Activated CD4-positive, alpha-beta T cell treated with anti-CD3 and anti-CD28 coated beads for 36 hours (primary cell): ENCODE measurements at regions of chr2 and their contacts with region 1.

Region 1: DNA sequence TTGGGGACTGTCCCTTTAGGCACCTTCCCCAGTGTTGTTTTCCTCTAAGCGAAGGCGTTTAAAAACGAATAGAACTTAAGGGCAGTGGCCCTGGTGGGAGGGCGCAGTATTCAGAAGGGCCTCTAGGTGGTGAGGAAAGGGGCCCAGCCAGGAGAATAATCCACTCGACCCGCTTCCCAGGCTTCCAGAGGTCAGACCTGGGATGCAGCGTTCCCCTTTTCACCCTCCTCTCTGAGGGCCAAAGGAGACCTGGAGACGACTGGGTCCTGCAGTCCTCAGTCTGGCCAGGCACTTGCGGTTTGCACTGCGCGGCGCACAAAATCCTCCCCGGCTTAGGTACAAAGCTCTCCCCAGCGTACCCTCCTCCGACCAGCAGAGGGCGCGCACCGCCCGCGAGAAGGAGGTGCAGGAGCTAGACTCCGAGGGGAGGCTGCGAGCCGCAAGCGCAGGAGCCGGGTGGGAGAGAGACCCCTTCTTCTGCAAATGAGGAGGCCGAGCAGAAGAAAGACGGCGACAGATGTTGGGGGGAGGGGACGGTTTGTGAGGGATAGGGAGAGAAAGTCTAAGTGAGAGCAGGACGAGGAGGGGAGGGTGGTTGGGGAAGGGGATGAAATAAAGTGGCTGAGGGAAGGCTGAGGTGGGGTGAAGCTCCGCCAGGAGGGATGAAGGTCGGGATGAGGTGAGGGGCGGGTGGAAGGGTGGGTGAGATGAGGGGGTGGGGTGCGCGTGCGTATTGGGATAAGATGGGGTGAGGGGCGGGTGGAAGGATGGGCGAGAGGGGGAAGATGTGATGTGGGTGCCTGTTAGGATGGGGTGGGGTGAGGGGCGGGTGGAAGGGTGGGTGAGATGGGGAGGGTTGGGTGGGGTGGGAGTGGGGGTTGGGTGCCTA is 4.9 kb downstream of the FEV start:
- DNase-seq: peak; percentile 93
- ATAC-seq: peak; percentile 90
- H3K4me3 Mint-ChIP-seq: peak overlapping the region; percentile 43
- H3K27ac Mint-ChIP-seq: no peak overlapping the region
- H3K4me1 Mint-ChIP-seq: peaks cover 28% of the 10 kb centered on the region
- H3K27me3 Mint-ChIP-seq: peaks cover 56% of the 10 kb centered on the region

Region 2: GRCh38 chr2:218876562-218877219 is 103.4 kb before region 1 on chr2:
- CTCF ChIA-PET with region 1: interaction called, 16 read pairs
- POLR2A ChIA-PET with region 1: no interaction called
- intact Hi-C with region 1: loop called (anchors 2 to 5 kb)
- DNase-seq: peak; percentile 83
- ATAC-seq: no peak
- H3K4me3 Mint-ChIP-seq: no peak overlapping the region
- H3K27ac Mint-ChIP-seq: no peak overlapping the region
- H3K4me1 Mint-ChIP-seq: peaks cover 43% of the 10 kb centered on the region
- H3K27me3 Mint-ChIP-seq: peaks cover 39% of the 10 kb centered on the region

Region 3: DNA sequence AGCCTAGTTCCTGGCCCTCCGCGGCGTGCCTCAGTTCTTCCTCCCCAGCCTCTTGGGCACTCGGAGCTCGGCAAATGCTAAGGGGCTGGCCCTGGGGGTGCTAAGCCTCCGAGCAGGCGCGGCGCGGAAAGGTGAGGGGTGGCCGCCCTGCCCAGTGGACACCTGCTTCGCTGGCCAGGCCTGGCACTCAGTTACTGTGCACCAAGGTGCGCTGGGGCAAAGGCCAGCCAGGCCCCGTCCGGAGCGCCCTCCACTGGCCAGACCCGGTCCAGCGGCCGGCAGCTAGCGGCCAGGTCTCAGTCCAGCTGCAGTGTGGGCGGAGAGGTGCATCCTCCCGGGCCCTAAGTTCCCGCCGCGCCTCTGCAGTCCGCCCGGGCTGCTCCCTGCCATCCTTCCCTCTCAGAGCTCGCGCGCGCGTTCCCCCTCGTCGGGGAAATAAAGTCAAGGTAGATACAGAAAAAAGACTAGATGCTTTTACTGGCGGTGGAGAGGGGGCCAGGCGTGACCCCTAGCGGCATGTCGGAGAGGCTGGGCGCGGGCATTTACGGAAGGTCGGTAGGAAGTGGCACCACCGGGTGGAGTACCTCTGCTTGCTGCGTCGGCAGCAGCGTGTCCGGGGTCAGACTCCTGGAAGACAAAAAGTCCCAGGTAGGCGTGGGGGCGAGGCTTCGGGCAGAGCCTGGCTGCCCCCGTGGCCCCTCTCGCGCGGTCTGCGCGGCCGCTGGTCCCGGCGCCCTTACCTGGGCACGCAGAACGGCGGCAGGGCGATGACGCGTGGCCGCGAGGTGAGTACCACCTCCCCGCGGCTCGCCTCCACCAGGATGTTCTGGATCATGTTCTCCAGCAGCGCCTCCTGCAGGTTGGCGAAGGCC is 22.5 kb after region 1 on chr2:
- CTCF ChIA-PET with region 1: interaction called, 70 read pairs
- POLR2A ChIA-PET with region 1: no interaction called
- intact Hi-C with region 1: loop called in 1 of 2 experiments (anchors 1 kb)
- DNase-seq: peak; percentile 83
- ATAC-seq: peak; percentile 67
- H3K4me3 Mint-ChIP-seq: peak overlapping the region; percentile 14
- H3K27ac Mint-ChIP-seq: no peak overlapping the region
- H3K4me1 Mint-ChIP-seq: peaks cover 14% of the 10 kb centered on the region
- H3K27me3 Mint-ChIP-seq: peaks cover 69% of the 10 kb centered on the region

Region 4: GRCh38 chr2:219057709-219058540 is 77.8 kb after region 1 on chr2:
- CTCF ChIA-PET with region 1: interaction called, 6 read pairs
- POLR2A ChIA-PET with region 1: no interaction called
- intact Hi-C with region 1: loop called (anchors 1 to 2 kb)
- DNase-seq: peak; percentile 90
- ATAC-seq: peak; percentile 97
- H3K4me3 Mint-ChIP-seq: no peak overlapping the region
- H3K27ac Mint-ChIP-seq: no peak overlapping the region
- H3K4me1 Mint-ChIP-seq: peaks cover 19% of the 10 kb centered on the region
- H3K27me3 Mint-ChIP-seq: peaks cover 56% of the 10 kb centered on the region

Region 5: GRCh38 chr2:219331560-219332213 is 351.6 kb after region 1 on chr2:
- CTCF ChIA-PET with region 1: no interaction called
- POLR2A ChIA-PET with region 1: no interaction called
- intact Hi-C with region 1: no loop called
- DNase-seq: peak; percentile 58
- ATAC-seq: no peak
- H3K4me3 Mint-ChIP-seq: no peak overlapping the region
- H3K27ac Mint-ChIP-seq: no peak overlapping the region
- H3K4me1 Mint-ChIP-seq: no peaks in the 10 kb centered on the region
- H3K27me3 Mint-ChIP-seq: peaks cover 48% of the 10 kb centered on the region